BJ (cell line): ENCODE measurements at regions of chr5 and their contacts with region 1.

Region 1: GRCh38 chr5:16809395-16810207 is 126.5 kb downstream of the MYO10 start:
- DNase-seq: peak; percentile 74
- H3K4me3 ChIP-seq: no peak overlapping the region
- H3K27me3 ChIP-seq: no peaks in the 10 kb centered on the region
- CTCF ChIP-seq: no peak

Region 2: DNA sequence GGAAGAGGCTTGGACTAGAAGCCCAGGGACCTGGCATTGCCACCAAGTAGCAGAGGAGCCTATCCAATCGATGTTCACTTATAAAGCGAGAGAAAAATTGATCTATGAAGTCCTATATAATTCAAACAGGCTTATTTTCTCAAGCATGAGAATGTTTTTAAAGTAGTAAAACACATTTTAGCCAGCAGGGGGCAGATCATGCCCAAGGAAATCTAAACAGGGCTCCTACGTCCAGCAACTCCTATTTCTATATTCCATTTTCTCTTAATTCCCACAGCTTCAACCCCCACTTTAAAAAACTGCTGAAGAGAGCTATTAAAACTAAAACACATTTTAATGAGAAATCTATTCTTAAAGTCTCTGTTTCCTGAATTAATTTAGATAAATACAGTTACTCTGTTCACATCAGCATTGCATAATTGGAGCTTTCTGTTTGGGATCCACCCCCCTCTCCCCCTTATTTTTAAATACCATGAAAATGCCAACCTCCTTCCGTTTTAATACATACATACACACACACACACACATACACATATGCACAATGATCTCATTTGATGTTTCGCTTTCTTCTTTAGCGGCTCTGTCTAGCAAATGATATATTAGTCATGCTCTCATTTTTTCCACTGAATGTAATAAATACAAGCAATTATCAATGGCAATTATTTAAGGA is 18.4 kb before region 1 on chr5:
- CTCF ChIA-PET with region 1: interaction called, 11 read pairs
- POLR2A ChIA-PET with region 1: no interaction called
- DNase-seq: no peak
- H3K4me3 ChIP-seq: no peak overlapping the region
- H3K27me3 ChIP-seq: no peaks in the 10 kb centered on the region
- CTCF ChIP-seq: peak; percentile 59

Region 3: GRCh38 chr5:16902846-16903245 is 93.2 kb after region 1 on chr5:
- CTCF ChIA-PET with region 1: no interaction called
- POLR2A ChIA-PET with region 1: no interaction called
- DNase-seq: no peak
- H3K4me3 ChIP-seq: no peak overlapping the region
- H3K27me3 ChIP-seq: no peaks in the 10 kb centered on the region
- CTCF ChIP-seq: no peak